T-cell (primary cell): ENCODE measurements at regions of chr18 and their contacts with region 1.

Region 1: GRCh38 chr18:32289483-32290075 is 99.7 kb downstream of the MEP1B start:
- DNase-seq: peak in 12 of 35 experiments; percentile 1 to 48 (median 10)
- ATAC-seq: peak in 2 of 4 experiments; percentile 45 to 48
- H3K4me3 ChIP-seq: no peak overlapping the region
- H3K4me3 Mint-ChIP-seq: no peak overlapping the region
- H3K27ac ChIP-seq: no peak overlapping the region
- H3K27ac Mint-ChIP-seq: no peak overlapping the region
- H3K4me1 ChIP-seq: no peaks in the 10 kb centered on the region
- H3K4me1 Mint-ChIP-seq: no peaks in the 10 kb centered on the region
- H3K27me3 ChIP-seq: peaks cover 0 to 11% of the 10 kb centered on the region in 2 experiments
- H3K27me3 Mint-ChIP-seq: peaks cover 4 to 20% of the 10 kb centered on the region in 2 donors

Region 2: GRCh38 chr18:32470713-32471633 is 181.4 kb after region 1 on chr18 and contains the start of gene GAREM1:
- CTCF ChIA-PET with region 1: interaction called in 1 of 2 experiments, 10 read pairs
- POLR2A ChIA-PET with region 1: no interaction called
- DNase-seq: peak; percentile 40 to 86 (median 68)
- ATAC-seq: peak; percentile 92 to 95 (median 93)
- H3K4me3 ChIP-seq: peak within 1 kb of the TSS; percentile 44 to 58
- H3K4me3 Mint-ChIP-seq: peak within 1 kb of the TSS; percentile 77 to 80 (median 80)
- H3K27ac ChIP-seq: no peak within 1 kb of the TSS
- H3K27ac Mint-ChIP-seq: peak within 1 kb of the TSS in 1 of 2 donors; percentile 71
- H3K4me1 ChIP-seq: peaks cover 8 to 20% of the 10 kb centered on the region in 2 experiments
- H3K4me1 Mint-ChIP-seq: peaks cover 22 to 35% (median 32%) of the 10 kb centered on the region in 3 donors
- H3K27me3 ChIP-seq: peaks cover 9 to 15% of the 10 kb centered on the region in 2 experiments
- H3K27me3 Mint-ChIP-seq: peaks cover 23 to 41% of the 10 kb centered on the region in 2 donors
- total RNA-seq, gene GAREM1: 0.26 to 0.41 (median 0.33) TPM